Right ventricle myocardium inferior (tissue), 1 donor: ENCODE measurements at regions of chr1 and their contacts with region 1.

Region 1: GRCh38 chr1:40257688-40258444 is at the start of gene ZMPSTE24:
- DNase-seq: peak; percentile 96
- ATAC-seq: peak; percentile 100
- total RNA-seq, gene ZMPSTE24: 37.4 TPM

Region 2: DNA sequence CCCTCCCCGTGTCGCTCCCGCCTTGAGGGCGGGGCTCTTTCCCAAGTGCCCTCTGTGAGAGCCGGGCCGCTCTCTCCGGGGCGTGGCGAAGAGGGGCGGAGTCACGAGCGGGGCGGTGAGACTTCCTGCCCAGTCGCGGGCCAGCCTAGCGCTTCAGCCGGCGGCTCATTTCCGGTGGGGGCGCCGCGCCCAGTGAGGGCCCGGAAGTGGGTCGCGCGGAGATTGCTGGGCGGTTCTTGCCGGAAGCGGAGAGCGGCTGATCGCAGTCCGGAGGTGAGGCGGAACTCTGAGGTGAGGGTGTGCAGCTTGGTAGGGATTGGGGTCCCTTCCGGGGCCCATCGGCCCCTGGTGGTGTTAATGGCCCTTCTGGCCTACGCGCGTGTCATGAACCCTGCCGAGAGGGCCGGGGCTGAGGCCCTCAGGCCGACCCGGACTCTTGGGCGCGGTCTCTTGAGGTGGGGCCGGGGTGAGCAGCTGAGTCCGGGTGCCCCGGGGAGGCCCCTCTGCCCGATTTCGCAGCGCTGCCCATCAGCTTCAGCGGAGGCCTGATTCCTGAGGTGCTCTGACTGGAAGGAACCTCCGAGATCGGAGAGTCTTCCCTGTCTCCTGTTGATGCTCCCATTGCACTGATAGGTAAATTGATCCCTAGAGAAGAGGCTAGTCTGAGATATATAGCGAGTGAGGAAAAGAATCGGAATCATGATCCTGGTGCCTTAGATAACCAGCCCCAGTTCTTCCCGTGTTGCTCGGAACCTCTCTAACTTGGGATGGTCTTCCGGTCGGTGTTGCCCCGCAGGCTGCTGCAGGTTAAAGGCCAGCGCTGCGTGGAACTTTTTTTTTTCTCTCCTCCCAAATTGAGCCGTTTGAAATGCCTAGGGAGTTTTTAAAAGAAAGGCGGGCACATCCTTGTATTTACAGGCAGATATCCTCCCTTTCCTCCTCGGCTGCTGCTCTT is 217.1 kb before region 1 on chr1 and contains the start of gene CAP1:
- intact Hi-C with region 1: loop called (anchors 10 kb)
- DNase-seq: peak; percentile 100
- ATAC-seq: peak; percentile 96
- total RNA-seq, gene CAP1: 88.8 TPM

Region 3: DNA sequence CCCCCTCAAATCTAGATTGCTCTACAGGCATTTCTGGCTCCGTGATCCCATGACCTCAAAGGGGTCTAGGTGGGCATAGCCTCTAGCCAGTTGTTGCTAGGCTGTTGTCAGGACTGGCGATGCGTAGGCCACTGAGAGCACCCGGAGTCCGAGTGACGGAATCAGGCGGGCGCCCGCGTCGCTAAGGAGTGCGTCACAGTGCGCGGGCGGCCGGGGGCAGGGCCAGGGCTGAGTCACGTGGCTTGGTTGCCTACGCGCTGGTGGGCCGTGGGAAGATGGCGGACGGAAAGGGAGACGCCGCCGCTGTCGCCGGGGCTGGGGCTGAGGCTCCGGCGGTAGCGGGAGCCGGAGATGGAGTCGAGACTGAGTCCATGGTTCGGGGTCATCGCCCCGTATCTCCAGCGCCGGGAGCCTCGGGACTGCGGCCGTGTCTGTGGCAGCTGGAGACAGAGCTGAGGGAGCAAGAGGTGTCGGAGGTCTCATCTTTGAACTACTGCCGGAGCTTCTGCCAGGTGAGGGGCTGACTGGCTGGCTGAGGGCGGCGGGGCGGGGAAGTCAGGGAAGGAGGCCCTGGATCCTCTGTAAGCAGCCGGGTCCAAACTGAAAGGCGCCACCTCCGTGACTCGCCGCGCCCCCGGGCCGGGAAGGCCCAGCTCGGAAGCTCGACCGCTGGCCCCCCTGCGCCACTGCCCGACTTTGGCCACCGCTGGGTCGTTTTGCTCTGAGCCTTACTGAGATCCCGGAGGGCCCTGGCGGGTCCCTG is 96.6 kb before region 1 on chr1 and contains the start of gene RLF:
- intact Hi-C with region 1: loop called (anchors 5 kb)
- DNase-seq: peak; percentile 97
- ATAC-seq: peak; percentile 99
- total RNA-seq, gene RLF: 12.7 TPM